Stomach (tissue), 19 donors: ENCODE measurements at regions of chr1 and their contacts with region 1.

Region 1: GRCh38 chr1:160101037-160101716 is 2.8 kb upstream of the IGSF8 start:
- DNase-seq: peak; percentile 80 to 92
- H3K4me3 ChIP-seq: no peak overlapping the region
- H3K27ac ChIP-seq: peak overlapping the region in 4 of 5 donors; percentile 33 to 97 (median 76)
- H3K4me1 ChIP-seq: peaks cover 22 to 73% (median 57%) of the 10 kb centered on the region in 4 donors
- H3K27me3 ChIP-seq: no peaks in the 10 kb centered on the region
- CTCF ChIP-seq: peak in 6 of 7 experiments; percentile 18 to 96 (median 89)
- EP300 ChIP-seq: no peak
- POLR2A ChIP-seq: no peak

Region 2: DNA sequence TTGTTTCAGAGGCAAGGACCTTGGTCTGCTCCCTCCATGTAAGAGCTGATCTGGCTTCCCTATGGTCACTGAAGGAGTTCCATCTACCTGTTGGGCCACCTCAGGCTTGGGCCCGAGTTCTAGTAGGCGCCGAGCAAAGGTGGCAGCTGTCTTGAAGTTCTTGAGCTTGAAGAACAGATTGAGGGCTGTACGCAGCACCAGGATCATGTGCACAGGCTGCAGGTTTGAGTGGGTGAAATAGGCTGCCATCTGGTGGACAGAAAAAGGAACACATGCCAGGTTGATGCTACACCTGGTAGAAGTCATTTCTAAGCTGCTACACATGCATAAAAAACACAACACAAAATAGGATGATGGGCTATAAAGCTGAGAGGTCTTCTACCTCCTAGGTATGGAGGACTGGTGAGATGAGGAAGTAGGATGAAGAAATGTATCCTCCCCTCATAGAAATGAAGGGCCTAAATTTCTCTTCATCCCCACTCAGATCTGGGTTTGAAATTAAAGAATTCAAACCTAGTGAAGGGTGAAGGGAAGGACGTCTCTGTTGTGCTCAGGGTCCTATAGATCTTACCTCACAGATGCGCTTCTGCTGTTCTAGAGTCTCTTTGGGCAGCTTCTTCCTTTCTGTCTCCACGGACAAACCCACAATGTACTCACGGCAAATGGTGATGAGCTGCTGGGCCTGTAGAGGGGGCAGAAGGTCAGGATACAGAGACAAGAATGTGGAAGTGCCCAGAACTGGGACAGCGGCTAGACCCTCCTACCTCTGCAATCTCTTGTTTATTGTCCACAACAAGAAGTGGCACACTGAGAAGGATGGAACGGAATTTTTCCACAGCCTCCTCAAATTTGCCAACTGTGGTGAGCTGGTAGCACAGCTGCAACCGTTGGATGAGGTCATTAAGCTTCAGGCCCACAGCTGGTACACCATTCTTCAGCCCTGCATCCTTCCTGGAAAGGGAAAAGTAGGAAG is 190.4 kb after region 1 on chr1:
- intact Hi-C with region 1: loop called (anchors 10 kb)
- DNase-seq: peak; percentile 71 to 91
- H3K4me3 ChIP-seq: no peak overlapping the region
- H3K27ac ChIP-seq: peak overlapping the region in 1 of 5 donors; percentile 48
- H3K4me1 ChIP-seq: peaks cover 0 to 6% (median 0%) of the 10 kb centered on the region in 4 donors
- H3K27me3 ChIP-seq: no peaks in the 10 kb centered on the region
- CTCF ChIP-seq: peak in 5 of 7 experiments; percentile 74 to 86 (median 81)
- EP300 ChIP-seq: no peak
- POLR2A ChIP-seq: no peak